OCI-LY7 (cell line): ENCODE measurements at regions of chr13 and their contacts with region 1.

Region 1: DNA sequence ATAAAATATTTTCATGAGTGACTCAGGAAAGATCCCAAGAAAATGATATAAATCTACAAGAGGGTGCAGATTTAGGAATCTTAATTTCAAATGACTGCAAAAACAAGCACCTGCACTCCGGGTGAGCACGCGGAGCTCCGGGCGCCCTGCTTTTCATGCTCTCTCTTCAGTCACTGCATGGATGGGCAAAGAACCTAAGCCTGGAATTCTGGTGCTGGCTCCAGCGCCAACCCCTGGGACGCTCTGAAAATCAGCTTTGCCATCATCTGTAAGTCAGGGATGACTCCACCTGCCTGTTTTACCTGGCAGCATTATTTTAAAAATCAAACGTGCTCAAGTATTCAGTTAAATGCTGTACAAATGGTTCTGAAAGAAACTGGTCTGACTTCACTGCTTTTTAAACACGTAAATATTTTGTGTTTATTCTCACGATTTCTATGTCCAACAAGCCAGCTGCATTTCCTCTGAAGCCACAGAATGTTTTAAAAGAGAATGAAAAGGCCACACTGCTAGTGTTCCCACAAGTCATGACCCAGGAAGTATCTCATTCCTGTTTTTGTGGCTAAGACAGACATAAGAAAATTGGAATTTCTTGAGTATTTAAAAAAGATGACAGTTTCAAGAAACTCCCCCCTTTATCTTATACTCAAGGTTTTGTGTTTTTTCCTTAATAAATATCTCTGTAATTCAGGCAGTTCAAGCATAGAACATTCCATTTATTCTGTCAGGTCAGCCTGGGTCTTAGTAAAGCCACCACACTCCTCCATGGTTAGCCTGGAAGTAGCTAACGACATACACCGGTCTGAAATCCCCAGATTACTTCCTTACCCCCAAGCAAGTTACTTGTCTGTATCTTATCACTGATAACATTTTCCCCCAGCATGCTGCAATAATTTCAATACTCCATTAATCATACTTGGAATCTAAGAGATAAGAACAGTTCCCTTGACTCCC is 81.1 kb downstream of the COL4A1 start:
- DNase-seq: no peak
- H3K4me3 ChIP-seq: no peak overlapping the region
- H3K27ac ChIP-seq: no peak overlapping the region
- H3K4me1 ChIP-seq: no peaks in the 10 kb centered on the region
- CTCF ChIP-seq: no peak

Region 2: GRCh38 chr13:110412132-110412914 is 186.4 kb after region 1 on chr13:
- CTCF ChIA-PET with region 1: no interaction called
- POLR2A ChIA-PET with region 1: no interaction called
- intact Hi-C with region 1: loop called (anchors 2 kb)
- DNase-seq: peak; percentile 27
- H3K4me3 ChIP-seq: no peak overlapping the region
- H3K27ac ChIP-seq: no peak overlapping the region
- H3K4me1 ChIP-seq: no peaks in the 10 kb centered on the region
- CTCF ChIP-seq: peak; percentile 76